ENCODE measurements at regions of chr22 and their contacts with region 1.

Region 1: DNA sequence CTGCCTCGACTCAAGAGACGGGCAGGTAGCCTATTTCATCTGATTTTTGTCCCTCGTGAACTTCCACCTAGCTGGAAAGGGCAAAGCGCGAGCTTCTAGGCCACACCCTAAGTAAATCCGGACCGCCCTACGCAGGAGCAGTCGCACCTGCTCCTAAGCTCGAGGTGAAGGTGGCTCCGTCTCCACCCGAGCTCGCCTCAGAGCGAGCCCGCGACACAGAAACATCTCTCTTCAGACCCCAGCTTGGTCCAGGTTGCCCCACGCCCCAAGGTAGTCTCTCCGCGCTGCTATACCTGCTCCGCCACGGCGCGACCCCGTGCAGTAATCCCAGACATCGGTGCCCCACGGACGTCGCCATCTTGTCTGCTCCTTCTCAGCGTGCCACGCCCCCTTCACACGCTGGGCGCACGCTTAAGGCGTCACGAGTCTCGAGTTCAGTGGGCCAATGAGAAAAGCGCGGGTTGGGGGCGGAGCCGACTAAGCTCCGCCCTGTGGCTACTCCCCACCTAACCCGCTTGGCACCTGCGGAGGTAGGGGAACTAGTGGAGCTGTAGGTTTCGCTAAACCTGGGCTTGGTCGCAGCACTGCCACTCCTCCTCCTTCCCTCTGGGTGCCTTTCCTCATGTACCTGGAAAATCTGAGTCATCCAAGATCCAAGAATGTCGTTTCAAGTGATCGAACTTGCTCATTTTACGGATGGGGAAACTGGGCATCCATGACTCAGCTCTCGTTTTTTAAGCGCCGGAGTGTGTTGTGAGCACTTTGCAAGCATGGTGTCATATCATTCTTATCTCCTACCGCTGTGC is at the start of gene PISD:
- DNase-seq: peak; percentile 97
- H3K4me3 Mint-ChIP-seq: peak within 1 kb of the TSS; percentile 91
- H3K27ac Mint-ChIP-seq: peak within 1 kb of the TSS; percentile 84
- H3K4me1 Mint-ChIP-seq: peaks cover 38% of the 10 kb centered on the region
- H3K27me3 Mint-ChIP-seq: no peaks in the 10 kb centered on the region
- total RNA-seq, gene PISD: 45.6 to 45.7 TPM

Region 2: DNA sequence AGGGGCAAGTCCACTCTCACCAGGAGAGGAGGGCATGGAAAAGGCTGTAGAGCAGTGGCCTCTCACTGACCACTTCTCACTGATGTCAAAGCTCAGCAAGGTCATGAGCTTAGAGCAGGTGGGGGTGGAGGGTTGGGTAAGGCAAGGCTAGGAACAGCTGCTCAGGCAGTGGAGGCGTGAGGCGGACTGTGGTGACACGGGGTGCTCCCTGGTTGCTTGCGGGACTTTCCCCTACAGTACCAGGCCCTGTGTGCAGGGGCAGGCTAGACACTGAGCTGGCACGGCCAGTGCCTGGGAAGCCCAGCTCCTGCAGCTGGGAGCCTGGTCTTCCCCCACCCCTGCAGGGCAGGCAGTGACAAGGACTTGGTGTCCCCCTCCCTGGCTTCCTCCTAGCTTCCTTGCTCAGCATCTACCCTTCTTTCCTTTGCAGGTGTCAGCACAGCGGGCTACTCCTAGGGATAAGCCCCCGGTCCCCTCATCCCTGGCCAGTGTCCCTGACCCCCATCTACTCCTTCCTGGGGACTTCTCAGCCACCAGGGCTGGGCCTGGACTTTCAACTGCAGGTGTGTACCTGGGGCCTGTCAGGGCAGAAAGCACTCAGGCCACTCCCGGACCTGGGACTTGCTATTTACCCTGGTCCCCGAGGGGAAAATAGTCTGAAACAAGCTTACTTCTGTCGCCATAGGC is 45.6 kb before region 1 on chr22:
- CTCF ChIA-PET with region 1: no interaction called
- intact Hi-C with region 1: no loop called
- DNase-seq: peak; percentile 74
- H3K4me3 Mint-ChIP-seq: no peak overlapping the region
- H3K27ac Mint-ChIP-seq: peak overlapping the region; percentile 82
- H3K4me1 Mint-ChIP-seq: peaks cover 20% of the 10 kb centered on the region
- H3K27me3 Mint-ChIP-seq: no peaks in the 10 kb centered on the region

Region 3: GRCh38 chr22:31646186-31647089 is 15.6 kb before region 1 on chr22:
- CTCF ChIA-PET with region 1: interaction called, 3 read pairs
- intact Hi-C with region 1: loop called (anchors 1 kb)
- DNase-seq: peak; percentile 76
- H3K4me3 Mint-ChIP-seq: no peak overlapping the region
- H3K27ac Mint-ChIP-seq: peak overlapping the region; percentile 91
- H3K4me1 Mint-ChIP-seq: peaks cover 53% of the 10 kb centered on the region
- H3K27me3 Mint-ChIP-seq: no peaks in the 10 kb centered on the region

Region 4: DNA sequence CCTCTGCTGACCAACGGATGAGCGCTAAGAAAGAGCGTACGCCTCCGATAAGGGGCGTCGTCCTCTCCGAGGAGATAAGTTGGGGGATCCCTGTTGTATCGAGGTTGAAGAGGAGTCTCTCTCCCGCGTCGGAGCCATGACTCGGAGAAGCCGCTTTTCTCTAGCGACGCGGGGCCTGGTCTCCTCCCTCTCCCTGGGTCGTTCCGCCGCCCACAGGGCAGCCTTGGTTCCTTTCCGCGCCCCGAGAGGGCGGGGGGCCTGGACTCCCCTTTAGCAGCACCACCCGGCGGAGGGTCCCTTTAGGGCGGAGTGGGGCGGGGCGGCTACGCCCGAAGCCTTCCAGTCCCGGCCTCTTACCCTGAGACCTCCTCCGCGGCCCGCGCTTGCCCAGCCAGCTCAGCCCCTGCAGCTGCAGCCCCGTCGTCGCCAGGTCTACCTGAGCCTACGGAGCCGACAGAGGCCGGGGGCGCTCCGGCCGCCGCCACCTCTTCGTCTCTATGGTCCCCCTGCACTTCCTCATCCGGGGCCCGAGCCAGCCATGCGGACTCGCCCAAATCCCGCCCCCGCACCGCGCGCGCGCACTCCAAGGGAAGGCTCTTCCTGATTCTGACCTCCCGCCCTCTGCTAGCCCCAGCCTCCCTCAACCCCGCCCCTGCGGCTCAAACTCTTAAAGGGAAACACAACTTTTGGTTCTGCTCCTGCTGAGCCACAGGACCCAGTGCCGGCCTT is 87.7 kb after region 1 on chr22 and contains the start of gene PRR14L:
- CTCF ChIA-PET with region 1: interaction called, 6 read pairs
- intact Hi-C with region 1: loop called (anchors 1 kb)
- DNase-seq: peak; percentile 99
- H3K4me3 Mint-ChIP-seq: peak within 1 kb of the TSS; percentile 87
- H3K27ac Mint-ChIP-seq: peak within 1 kb of the TSS; percentile 93
- H3K4me1 Mint-ChIP-seq: peaks cover 55% of the 10 kb centered on the region
- H3K27me3 Mint-ChIP-seq: no peaks in the 10 kb centered on the region
- total RNA-seq, gene PRR14L: 28.7 to 31.8 TPM

Region 5: GRCh38 chr22:31943976-31944699 is 282.1 kb after region 1 on chr22 and contains the start of gene YWHAH:
- CTCF ChIA-PET with region 1: interaction called, 8 read pairs
- intact Hi-C with region 1: loop called (anchors 1 kb)
- DNase-seq: peak; percentile 93
- H3K4me3 Mint-ChIP-seq: no peak within 1 kb of the TSS
- H3K27ac Mint-ChIP-seq: peak within 1 kb of the TSS; percentile 87
- H3K4me1 Mint-ChIP-seq: peaks cover 18% of the 10 kb centered on the region
- H3K27me3 Mint-ChIP-seq: no peaks in the 10 kb centered on the region
- total RNA-seq, gene YWHAH: 115 to 118 TPM

Region 6: GRCh38 chr22:32080904-32081303 is 418.9 kb after region 1 on chr22:
- CTCF ChIA-PET with region 1: no interaction called
- intact Hi-C with region 1: loop called (anchors 1 kb)
- DNase-seq: peak; percentile 51
- H3K4me3 Mint-ChIP-seq: no peak overlapping the region
- H3K27ac Mint-ChIP-seq: no peak overlapping the region
- H3K4me1 Mint-ChIP-seq: no peaks in the 10 kb centered on the region
- H3K27me3 Mint-ChIP-seq: no peaks in the 10 kb centered on the region

Region 7: GRCh38 chr22:32474635-32475467 is 812.8 kb after region 1 on chr22 and contains the start of gene FBXO7:
- CTCF ChIA-PET with region 1: no interaction called
- intact Hi-C with region 1: loop called (anchors 10 kb)
- DNase-seq: peak; percentile 86
- H3K4me3 Mint-ChIP-seq: peak within 1 kb of the TSS; percentile 92
- H3K27ac Mint-ChIP-seq: peak within 1 kb of the TSS; percentile 93
- H3K4me1 Mint-ChIP-seq: peaks cover 17% of the 10 kb centered on the region
- H3K27me3 Mint-ChIP-seq: no peaks in the 10 kb centered on the region
- total RNA-seq, gene FBXO7: 62.5 to 65.9 TPM

Measured in activated naive CD4-positive, alpha-beta T cell treated with anti-CD3 and anti-CD28 coated beads for 36 hours (primary cell).